WTC11 (cell line): ENCODE measurements at regions of chr11 and their contacts with region 1.

Region 1: GRCh38 chr11:123235117-123235655 is 40.1 kb upstream of the CLMP start:
- DNase-seq: peak; percentile 75
- ATAC-seq: peak; percentile 93
- H3K4me3 Mint-ChIP-seq: no peak overlapping the region
- H3K27ac Mint-ChIP-seq: no peak overlapping the region
- H3K4me1 Mint-ChIP-seq: peaks cover 7% of the 10 kb centered on the region; the same call in 1 of the 2 replicates
- H3K27me3 Mint-ChIP-seq: peaks cover 3% of the 10 kb centered on the region; the same call in 1 of the 2 replicates
- CTCF ChIP-seq: peak; percentile 58

Region 2: DNA sequence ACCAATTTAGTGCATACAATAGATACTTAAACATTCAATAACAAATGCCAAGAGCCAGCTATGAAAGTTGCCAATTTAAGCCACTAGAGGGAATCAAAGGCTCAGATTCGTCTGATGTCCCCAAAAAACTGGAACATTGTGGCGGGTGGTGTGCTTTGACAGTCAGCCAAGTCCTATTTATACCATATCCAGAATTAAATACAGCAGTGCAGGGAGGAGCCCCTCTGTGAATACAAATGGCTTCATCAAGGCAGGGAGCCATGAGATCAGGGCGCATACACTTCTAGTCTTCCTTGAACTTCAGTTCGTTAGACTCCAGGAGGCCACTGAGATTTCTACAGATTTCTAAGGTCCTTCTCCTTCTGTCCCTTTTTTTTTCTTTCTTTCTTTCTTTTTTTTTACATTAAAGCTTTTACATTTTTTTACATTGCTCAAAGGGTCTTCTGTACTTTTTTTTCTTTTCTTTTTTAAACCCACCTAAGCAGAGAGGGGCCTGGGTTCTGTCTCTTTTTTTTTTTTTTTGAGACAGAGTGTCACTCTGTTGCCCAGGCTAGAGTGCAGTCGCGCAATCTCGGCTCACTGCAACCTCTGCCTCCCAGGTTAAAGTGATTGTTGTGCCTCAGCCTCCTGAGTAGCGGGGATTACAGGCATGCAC is 131.7 kb before region 1 on chr11:
- CTCF ChIA-PET with region 1: interaction called, 17 read pairs
- POLR2A ChIA-PET with region 1: no interaction called
- DNase-seq: peak; percentile 22
- ATAC-seq: peak; percentile 65
- H3K4me3 Mint-ChIP-seq: no peak overlapping the region
- H3K27ac Mint-ChIP-seq: 0 out of 2 replicates have a peak overlapping the region, but pooled peaks have one; percentile 41
- H3K4me1 Mint-ChIP-seq: peaks cover 27% of the 10 kb centered on the region
- H3K27me3 Mint-ChIP-seq: no peaks in the 10 kb centered on the region
- CTCF ChIP-seq: peak; percentile 46

Region 3: GRCh38 chr11:123110356-123110755 is 124.8 kb before region 1 on chr11:
- CTCF ChIA-PET with region 1: interaction called, 16 read pairs
- POLR2A ChIA-PET with region 1: no interaction called
- DNase-seq: no peak
- ATAC-seq: no peak
- H3K4me3 Mint-ChIP-seq: no peak overlapping the region
- H3K27ac Mint-ChIP-seq: no peak overlapping the region
- H3K4me1 Mint-ChIP-seq: peaks cover 3% of the 10 kb centered on the region
- H3K27me3 Mint-ChIP-seq: no peaks in the 10 kb centered on the region
- CTCF ChIP-seq: no peak

Region 4: DNA sequence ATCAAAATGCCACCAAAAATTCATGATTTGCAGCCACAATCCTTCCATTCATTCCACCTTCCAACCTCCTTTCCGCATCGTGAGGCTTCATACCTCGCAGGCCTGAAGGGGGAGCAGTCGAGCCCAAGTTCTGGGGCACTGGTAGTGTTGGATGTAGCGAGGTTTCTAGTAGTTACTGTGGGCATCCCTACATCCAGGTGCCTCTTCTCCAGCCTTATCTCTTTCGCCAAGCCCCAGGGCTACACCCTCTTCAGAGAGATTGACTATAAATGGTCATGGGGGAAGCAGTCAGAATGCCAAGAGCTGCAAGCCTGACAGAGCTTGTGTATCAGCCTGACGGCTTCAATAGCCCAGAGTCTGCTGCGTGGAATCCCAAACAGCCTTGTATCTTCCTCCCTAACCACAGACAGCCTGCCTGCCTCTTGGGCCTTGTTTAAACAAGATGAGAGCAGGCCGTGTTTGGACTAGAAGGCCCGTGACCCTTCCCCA is 69.1 kb before region 1 on chr11:
- CTCF ChIA-PET with region 1: interaction called, 21 read pairs
- POLR2A ChIA-PET with region 1: no interaction called
- DNase-seq: peak; percentile 80
- ATAC-seq: peak; percentile 93
- H3K4me3 Mint-ChIP-seq: no peak overlapping the region
- H3K27ac Mint-ChIP-seq: no peak overlapping the region
- H3K4me1 Mint-ChIP-seq: peaks cover 46% of the 10 kb centered on the region
- H3K27me3 Mint-ChIP-seq: no peaks in the 10 kb centered on the region; the same call in 1 of the 2 replicates
- CTCF ChIP-seq: peak; percentile 59

Region 5: GRCh38 chr11:123188508-123189165 is 46.5 kb before region 1 on chr11:
- CTCF ChIA-PET with region 1: interaction called, 10 read pairs
- POLR2A ChIA-PET with region 1: interaction called, 4 read pairs
- DNase-seq: no peak
- ATAC-seq: peak; percentile 63
- H3K4me3 Mint-ChIP-seq: 0 out of 2 replicates have a peak overlapping the region, but pooled peaks have one; percentile 31
- H3K27ac Mint-ChIP-seq: peak overlapping the region; percentile 38; the same call in 1 of the 2 replicates
- H3K4me1 Mint-ChIP-seq: peaks cover 67% of the 10 kb centered on the region
- H3K27me3 Mint-ChIP-seq: no peaks in the 10 kb centered on the region
- CTCF ChIP-seq: no peak

Region 6: DNA sequence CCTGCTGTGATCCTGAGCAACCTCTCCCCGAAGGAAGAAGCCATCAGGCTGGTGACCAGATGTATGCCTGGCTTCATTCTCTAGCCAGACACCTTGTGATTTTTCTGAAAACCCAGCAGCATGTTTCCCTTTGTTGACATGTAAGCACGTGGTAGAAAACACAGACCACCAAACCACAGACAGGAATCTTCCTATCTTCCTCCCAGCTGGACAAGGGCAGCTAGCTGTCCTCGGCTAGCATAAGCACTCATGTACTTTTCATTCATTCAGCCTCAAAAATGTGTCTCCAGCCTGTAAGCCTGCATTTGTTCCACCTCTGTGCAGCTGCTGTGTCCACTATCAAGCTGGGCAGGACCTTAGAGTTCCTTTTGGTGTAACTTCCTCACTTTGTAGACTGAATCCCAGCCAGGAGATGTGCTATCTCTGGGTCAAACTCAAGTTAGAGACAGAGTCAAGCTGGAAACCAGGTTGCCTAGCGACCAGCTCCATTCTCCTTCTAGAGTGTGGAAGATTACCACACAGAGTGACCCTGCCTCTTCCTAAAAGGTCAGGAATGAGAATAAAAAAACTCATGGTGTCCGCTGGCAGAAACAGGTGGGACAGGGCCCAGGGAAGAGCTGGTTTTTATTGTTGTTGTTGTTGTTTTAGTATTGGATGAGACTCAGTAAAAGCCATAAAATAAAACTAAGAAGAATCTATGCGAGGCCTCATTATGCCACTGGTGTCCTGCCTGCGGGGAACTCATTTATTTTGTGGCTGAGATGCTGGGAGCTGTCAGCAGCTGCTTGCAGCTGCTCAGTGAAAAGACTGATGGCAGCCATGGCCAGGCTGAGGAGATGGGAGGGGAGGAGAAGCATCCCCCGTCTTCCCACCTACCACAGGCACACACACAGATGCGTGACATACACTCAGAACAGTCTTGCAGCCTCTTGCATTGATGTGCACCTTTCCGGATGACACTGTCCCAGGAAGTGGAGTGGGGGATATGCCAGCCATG is 32.7 kb before region 1 on chr11:
- CTCF ChIA-PET with region 1: interaction called, 13 read pairs
- POLR2A ChIA-PET with region 1: no interaction called
- DNase-seq: no peak
- ATAC-seq: no peak
- H3K4me3 Mint-ChIP-seq: no peak overlapping the region
- H3K27ac Mint-ChIP-seq: no peak overlapping the region; the same call in 1 of the 2 replicates
- H3K4me1 Mint-ChIP-seq: peaks cover 40% of the 10 kb centered on the region
- H3K27me3 Mint-ChIP-seq: peaks cover 17% of the 10 kb centered on the region
- CTCF ChIP-seq: no peak